Activated CD8-positive, alpha-beta T cell treated with anti-CD3 and anti-CD28 coated beads for 36 hours (primary cell): ENCODE measurements at regions of chr6 and their contacts with region 1.

Region 1: GRCh38 chr6:14210663-14211561 is 93.3 kb downstream of the CD83 start:
- DNase-seq: peak; percentile 90
- ATAC-seq: peak; percentile 94
- H3K4me3 Mint-ChIP-seq: peak overlapping the region; percentile 74
- H3K27ac Mint-ChIP-seq: peak overlapping the region; percentile 70
- H3K4me1 Mint-ChIP-seq: peaks cover 8% of the 10 kb centered on the region
- H3K27me3 Mint-ChIP-seq: no peaks in the 10 kb centered on the region
- CTCF ChIP-seq: peak; percentile 54

Region 2: GRCh38 chr6:14711056-14711703 is 500.3 kb after region 1 on chr6:
- CTCF ChIA-PET with region 1: no interaction called
- POLR2A ChIA-PET with region 1: no interaction called
- intact Hi-C with region 1: loop called (anchors 10 kb)
- DNase-seq: peak; percentile 68
- ATAC-seq: peak; percentile 78
- H3K4me3 Mint-ChIP-seq: no peak overlapping the region
- H3K27ac Mint-ChIP-seq: peak overlapping the region; percentile 89
- H3K4me1 Mint-ChIP-seq: peaks cover 22% of the 10 kb centered on the region
- H3K27me3 Mint-ChIP-seq: no peaks in the 10 kb centered on the region
- CTCF ChIP-seq: peak; percentile 58